ENCODE measurements at regions of chr1 and their contacts with region 1.

Region 1: DNA sequence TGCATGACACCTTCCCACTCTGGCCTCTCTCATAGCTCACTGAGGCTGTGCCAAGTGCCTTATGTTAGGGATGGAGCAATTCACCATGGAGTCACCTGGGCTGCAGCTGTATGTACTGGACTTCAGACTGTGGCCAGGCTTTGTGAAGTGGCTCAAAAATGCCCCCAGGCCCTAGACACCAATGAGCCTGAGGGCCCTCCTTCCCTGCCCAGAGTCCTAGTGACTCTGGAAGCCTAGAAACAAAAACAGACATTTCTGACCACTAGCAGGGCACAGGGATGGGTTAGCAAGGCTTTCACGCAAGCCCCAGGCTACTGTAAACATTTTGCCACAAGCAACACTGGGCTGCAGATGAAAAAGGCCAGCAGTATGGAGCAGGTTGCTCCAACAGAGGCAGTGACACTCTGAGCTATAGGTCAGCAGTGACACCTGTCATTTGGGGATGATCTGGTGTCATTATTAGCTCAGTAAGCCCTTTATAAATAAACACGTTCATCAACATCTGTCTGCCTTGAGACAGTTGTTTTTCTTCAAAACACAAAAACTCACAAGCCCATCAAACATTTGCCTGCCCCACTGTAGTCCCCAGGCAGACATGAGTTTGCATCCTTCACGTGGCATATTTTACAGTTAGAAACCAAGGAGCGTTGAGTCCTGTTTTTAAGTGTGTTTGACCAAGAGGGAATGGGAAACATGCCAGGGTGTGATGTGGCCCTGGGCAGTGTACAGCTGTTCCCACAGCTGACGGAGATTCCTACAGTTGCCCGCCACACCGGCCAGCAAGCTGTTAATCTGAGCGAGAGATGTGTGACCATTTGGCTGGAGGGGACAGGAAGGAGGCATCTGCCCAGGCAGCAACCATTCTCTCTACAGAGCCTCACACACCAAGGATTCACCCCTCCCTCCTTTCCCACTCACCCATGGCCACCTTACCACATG is 66.8 kb downstream of the KCNN3 start:
- DNase-seq: no peak
- CTCF ChIP-seq: no peak

Region 2: DNA sequence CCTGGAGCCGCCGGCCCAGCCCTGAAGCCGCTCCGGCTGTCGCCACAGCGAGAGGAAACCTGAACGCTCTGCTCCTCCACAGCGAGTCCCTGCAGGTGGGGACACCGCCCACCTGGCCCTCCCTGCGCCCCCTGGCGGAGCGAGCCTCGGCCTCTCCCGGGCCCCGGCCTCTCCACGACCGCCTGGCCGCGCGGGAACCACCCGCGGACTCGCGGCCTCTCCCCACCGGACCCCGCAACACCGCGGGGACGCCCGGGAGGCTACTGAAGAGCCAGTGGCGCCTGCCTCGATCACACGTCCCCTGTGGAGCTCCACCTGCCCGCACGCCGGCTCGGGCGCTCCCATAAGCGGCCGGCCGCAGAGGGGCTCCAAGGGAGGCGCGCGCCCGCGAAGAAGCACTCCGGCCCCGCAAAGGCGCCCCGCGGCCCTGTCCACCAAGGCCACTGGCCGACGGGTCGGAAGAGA is 42.8 kb before region 1 on chr1:
- CTCF ChIA-PET with region 1: interaction called, 15 read pairs
- POLR2A ChIA-PET with region 1: no interaction called
- DNase-seq: peak; percentile 88
- CTCF ChIP-seq: peak; percentile 85

Measured in GM10248 (cell line).